Psoas muscle (tissue), 8 donors: ENCODE measurements at regions of chr18 and their contacts with region 1.

Region 1: GRCh38 chr18:23131693-23132319 is 3.5 kb upstream of the CABLES1 start:
- DNase-seq: no peak
- ATAC-seq: peak; percentile 65 to 79 (median 74)
- H3K4me3 ChIP-seq: no peak overlapping the region
- H3K27ac ChIP-seq: no peak overlapping the region
- H3K4me1 ChIP-seq: peaks cover 10% of the 10 kb centered on the region
- H3K27me3 ChIP-seq: peaks cover 0 to 29% (median 10%) of the 10 kb centered on the region in 3 donors
- CTCF ChIP-seq: peak; percentile 79

Region 2: DNA sequence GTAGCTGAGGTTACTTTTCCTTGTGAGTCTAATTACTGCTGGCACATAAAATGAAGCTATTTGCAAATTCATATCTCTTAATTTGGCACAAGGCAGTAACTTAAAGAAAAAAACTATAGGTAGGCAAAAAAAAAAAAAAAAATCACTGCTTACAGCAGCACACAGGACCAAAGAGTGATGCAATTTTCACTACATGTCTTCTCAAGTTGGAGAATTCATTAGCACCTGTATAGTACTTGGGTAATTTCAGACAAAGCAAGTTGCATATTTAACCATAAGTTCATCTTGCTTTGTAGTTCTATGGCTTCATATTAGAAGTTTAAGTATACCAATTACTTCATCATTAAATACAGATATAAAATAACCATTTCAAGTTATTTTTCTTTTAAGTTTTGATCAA is 232.4 kb before region 1 on chr18:
- intact Hi-C with region 1: no loop called
- DNase-seq: no peak
- ATAC-seq: no peak
- H3K4me3 ChIP-seq: no peak overlapping the region
- H3K27ac ChIP-seq: no peak overlapping the region
- H3K4me1 ChIP-seq: no peaks in the 10 kb centered on the region
- H3K27me3 ChIP-seq: no peaks in the 10 kb centered on the region
- CTCF ChIP-seq: no peak

Region 3: GRCh38 chr18:23356915-23357601 is 225.3 kb after region 1 on chr18:
- intact Hi-C with region 1: loop called (anchors 5 kb)
- DNase-seq: no peak
- ATAC-seq: peak in 1 of 4 donors; percentile 25
- H3K4me3 ChIP-seq: no peak overlapping the region
- H3K27ac ChIP-seq: peak overlapping the region; percentile 59
- H3K4me1 ChIP-seq: peaks cover 10% of the 10 kb centered on the region
- H3K27me3 ChIP-seq: no peaks in the 10 kb centered on the region
- CTCF ChIP-seq: no peak

Region 4: DNA sequence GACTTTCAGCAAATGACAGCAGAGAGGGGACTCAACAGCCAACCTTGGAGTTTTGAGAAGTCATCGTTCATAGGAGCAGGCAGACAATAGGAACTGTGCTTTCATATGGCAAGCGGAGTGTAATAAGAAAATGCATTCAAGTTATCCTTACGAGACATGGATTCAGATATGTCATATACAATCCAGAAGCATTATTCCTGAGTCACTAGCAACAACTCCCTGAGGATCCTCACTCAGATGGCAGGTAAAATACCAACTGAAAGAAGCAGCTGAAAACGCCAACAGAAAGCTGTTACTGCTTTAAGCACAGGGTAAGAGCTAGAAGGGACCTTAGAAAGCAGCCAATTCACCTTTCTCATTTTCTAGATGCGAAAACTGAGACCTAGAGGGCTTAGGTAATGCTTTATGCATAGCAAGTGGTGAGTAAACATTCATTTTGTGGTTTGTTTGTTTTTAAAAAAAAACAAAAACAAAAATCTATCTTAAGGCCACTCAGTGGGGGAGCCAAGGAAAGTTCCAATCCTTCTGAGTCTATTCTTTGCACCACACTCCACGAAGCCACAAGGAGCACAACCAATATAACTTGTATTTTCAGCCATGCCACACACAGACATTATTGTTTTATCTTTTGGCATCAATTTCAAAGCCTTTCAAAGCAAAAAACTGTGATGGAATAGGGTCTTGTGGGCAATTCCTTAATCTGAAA is 232.2 kb after region 1 on chr18:
- intact Hi-C with region 1: loop called (anchors 5 kb)
- DNase-seq: no peak
- ATAC-seq: no peak
- H3K4me3 ChIP-seq: no peak overlapping the region
- H3K27ac ChIP-seq: no peak overlapping the region
- H3K4me1 ChIP-seq: no peaks in the 10 kb centered on the region
- H3K27me3 ChIP-seq: no peaks in the 10 kb centered on the region
- CTCF ChIP-seq: no peak

Region 5: DNA sequence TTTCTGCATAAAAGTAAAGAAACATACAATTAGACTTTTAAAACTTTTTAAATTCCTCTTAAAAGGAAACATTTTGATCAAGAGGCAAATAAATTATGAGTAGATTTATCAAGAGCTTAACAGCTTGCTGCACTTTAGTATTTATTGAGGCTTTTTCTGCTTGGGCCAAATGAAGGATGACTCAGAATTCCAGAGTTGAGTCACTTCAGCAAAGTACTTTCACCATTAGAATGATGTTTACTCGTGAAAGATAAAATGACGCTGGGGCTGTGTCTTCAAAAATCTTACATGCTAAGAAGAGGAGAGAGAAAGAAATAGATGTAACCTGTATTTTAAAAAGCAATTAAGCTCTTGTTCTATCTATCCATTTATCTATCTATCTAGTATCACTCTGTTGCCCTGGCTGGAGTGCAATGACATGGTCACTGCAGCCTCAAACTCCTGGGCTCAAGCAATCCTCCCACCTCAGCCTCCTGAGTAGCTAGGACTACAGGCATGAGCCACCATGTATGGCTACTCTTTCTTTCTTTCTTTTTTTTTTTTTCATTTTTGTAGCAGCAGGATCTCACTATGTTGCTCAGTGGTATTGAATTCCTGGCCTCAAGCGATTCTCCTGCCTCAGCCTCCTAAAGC is 246.0 kb after region 1 on chr18:
- intact Hi-C with region 1: loop called (anchors 5 to 10 kb)
- DNase-seq: no peak
- ATAC-seq: peak in 1 of 4 donors; percentile 53
- H3K4me3 ChIP-seq: no peak overlapping the region
- H3K27ac ChIP-seq: no peak overlapping the region
- H3K4me1 ChIP-seq: peaks cover 4% of the 10 kb centered on the region
- H3K27me3 ChIP-seq: no peaks in the 10 kb centered on the region
- CTCF ChIP-seq: no peak

Region 6: GRCh38 chr18:23406271-23406787 is 274.5 kb after region 1 on chr18:
- intact Hi-C with region 1: loop called (anchors 2 to 5 kb)
- DNase-seq: no peak
- ATAC-seq: no peak
- H3K4me3 ChIP-seq: no peak overlapping the region
- H3K27ac ChIP-seq: no peak overlapping the region
- H3K4me1 ChIP-seq: no peaks in the 10 kb centered on the region
- H3K27me3 ChIP-seq: no peaks in the 10 kb centered on the region
- CTCF ChIP-seq: no peak

Region 7: DNA sequence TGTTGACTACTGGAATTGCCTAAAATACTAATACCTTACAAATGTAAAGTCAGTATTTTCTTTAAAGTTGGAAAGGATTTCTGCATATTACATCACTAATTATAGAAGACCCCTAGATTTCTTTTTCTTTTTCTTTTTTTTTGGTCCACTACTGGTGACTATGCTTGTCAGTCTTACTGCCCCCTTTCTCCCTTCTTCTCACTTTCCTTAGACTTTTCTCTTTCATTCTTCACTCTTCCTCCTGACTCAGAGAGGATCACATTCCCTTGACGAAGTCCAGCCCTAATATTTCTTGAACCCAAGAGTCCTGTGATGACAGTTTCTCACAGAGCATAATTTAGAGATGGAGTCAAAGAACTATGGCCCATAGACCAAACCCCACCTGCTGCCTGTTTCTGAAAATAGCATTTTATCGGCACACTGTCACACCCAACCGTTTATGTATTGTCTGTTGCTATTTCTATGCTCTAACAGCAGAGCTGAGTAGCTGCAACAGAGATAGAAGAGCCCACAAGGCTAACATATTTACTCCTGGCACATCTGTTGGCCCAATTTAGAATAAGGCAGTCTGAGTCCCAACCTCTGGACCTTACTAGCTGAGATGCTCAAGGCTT is 280.7 kb after region 1 on chr18:
- intact Hi-C with region 1: loop called (anchors 2 to 5 kb)
- DNase-seq: no peak
- ATAC-seq: no peak
- H3K4me3 ChIP-seq: no peak overlapping the region
- H3K27ac ChIP-seq: no peak overlapping the region
- H3K4me1 ChIP-seq: no peaks in the 10 kb centered on the region
- H3K27me3 ChIP-seq: no peaks in the 10 kb centered on the region
- CTCF ChIP-seq: no peak